GM12878 (cell line): ENCODE measurements at regions of chr1 and their contacts with region 1.

Region 1: GRCh38 chr1:160098852-160099561 is 588 bp upstream of the IGSF8 start:
- DNase-seq: peak; percentile 55
- ATAC-seq: peak; percentile 85
- H3K4me3 ChIP-seq: peak overlapping the region; percentile 82
- H3K27ac ChIP-seq: peak overlapping the region; percentile 54; the same call in 1 of the 2 replicates
- H3K4me1 ChIP-seq: peaks cover 25% of the 10 kb centered on the region
- H3K27me3 ChIP-seq: no peaks in the 10 kb centered on the region
- CTCF ChIP-seq: no peak
- EP300 ChIP-seq: no peak
- POLR2A ChIP-seq: no peak
- RAD21 ChIP-seq: no peak

Region 2: DNA sequence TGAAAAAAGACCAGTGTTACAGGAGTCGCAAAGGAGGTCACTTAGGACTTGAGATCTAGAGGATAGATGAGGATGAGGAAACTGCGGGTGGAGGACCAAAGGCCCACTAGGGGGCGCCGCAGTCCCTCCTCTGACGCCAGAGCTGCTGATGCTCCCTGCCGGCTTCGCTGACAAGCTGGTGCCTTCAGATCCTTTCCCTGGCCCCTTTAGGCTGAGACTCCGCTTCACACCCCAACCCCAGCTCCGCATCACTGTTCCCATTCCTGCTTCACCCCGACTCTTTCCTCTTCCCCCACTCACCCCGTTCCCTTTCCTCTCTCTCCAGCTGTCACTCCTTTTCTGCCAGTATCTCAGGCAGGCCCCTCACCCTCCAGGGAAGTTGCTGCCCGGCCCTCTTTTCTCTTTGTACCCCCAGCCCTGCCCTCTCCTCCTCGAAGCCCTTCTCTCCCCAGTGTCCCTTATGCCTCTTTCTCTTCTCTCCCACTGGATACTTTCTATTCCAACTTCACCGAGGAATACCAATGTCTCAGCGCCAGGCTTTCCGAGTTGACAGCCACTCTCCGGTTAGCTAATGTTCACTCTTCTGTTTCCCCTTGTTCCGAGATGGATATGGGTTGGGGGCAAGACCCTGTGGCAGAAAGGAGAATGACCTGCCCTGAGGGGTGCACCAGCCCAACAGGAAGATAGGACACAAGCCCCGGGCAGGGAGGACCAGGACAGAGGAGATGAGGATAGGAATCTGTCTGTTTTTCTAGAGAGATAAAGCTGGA is 13.1 kb before region 1 on chr1:
- CTCF ChIA-PET with region 1: interaction called, 1,035 read pairs
- POLR2A ChIA-PET with region 1: interaction called, 4 read pairs
- RAD21 ChIA-PET with region 1: interaction called, 31 read pairs
- SMC1A ChIA-PET with region 1: interaction called, 35 read pairs
- in situ Hi-C with region 1: no loop called
- intact Hi-C with region 1: no loop called
- DNase-seq: no peak
- ATAC-seq: peak; percentile 87
- H3K4me3 ChIP-seq: no peak overlapping the region
- H3K27ac ChIP-seq: no peak overlapping the region
- H3K4me1 ChIP-seq: no peaks in the 10 kb centered on the region
- H3K27me3 ChIP-seq: peaks cover 0 to 2% of the 10 kb centered on the region in 2 experiments; a peak in 3 of 4 replicates
- CTCF ChIP-seq: peak; percentile 82 to 89 (median 88)
- EP300 ChIP-seq: no peak
- POLR2A ChIP-seq: no peak
- RAD21 ChIP-seq: peak; percentile 59

Region 3: GRCh38 chr1:160161965-160162705 is 63.1 kb after region 1 on chr1:
- CTCF ChIA-PET with region 1: interaction called, 10 read pairs
- POLR2A ChIA-PET with region 1: no interaction called
- RAD21 ChIA-PET with region 1: no interaction called
- SMC1A ChIA-PET with region 1: interaction called, 4 read pairs
- in situ Hi-C with region 1: no loop called
- intact Hi-C with region 1: no loop called
- DNase-seq: no peak
- ATAC-seq: peak; percentile 92
- H3K4me3 ChIP-seq: no peak overlapping the region
- H3K27ac ChIP-seq: no peak overlapping the region
- H3K4me1 ChIP-seq: peaks cover 17% of the 10 kb centered on the region
- H3K27me3 ChIP-seq: no peaks in the 10 kb centered on the region; a peak in 1 of 4 replicates
- CTCF ChIP-seq: peak; percentile 51 to 63 (median 60); a peak in 5 of 6 replicates
- EP300 ChIP-seq: no peak
- POLR2A ChIP-seq: no peak
- RAD21 ChIP-seq: peak; percentile 72

Region 4: DNA sequence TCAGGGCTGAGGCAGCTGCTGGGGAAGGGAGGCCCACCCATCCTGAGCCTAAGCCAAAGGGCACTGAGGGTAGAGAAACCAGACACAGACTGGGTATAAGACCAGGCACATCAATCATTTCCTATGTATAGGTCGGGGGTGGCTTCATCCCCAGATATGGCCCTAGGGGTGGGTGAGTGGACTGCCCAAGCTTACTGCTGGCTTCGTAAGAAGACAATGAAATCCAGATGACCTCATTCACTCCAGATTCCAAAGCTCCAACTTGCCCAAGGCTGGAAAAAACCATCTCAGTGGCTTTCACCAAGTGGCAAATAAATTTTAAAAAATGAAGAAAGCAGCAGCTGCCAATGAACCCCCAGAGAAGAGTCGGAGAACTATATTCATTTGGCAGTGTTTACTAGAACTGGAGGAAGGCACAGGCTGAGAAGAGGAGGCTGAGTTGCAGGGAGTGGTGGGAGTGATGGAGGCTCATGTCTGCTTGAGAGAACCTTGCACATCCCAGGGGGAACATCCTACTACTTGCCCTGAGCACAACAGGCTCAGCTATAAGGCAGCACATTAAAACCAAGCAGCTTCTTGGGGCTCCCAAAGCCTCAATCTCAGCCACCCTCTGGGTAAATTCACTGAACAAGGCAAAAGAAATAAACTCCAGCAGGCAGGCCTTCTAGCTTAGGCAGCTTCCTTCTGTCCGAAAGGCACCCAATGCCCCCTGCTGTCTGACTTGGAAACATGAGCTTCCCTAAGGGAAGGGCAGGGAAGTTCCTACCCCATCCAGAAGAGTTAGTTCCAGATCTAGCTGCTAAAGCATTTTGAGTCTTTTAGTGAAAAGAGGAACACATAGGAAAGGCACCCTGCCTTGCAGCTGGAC is 120.3 kb after region 1 on chr1:
- CTCF ChIA-PET with region 1: interaction called, 21 read pairs
- POLR2A ChIA-PET with region 1: no interaction called
- RAD21 ChIA-PET with region 1: interaction called, 10 read pairs
- SMC1A ChIA-PET with region 1: interaction called, 11 read pairs
- in situ Hi-C with region 1: no loop called
- intact Hi-C with region 1: no loop called
- DNase-seq: no peak
- ATAC-seq: peak; percentile 44
- H3K4me3 ChIP-seq: no peak overlapping the region
- H3K27ac ChIP-seq: no peak overlapping the region
- H3K4me1 ChIP-seq: no peaks in the 10 kb centered on the region
- H3K27me3 ChIP-seq: no peaks in the 10 kb centered on the region
- CTCF ChIP-seq: peak; percentile 21 to 34 (median 34); a peak in 3 of 6 replicates
- EP300 ChIP-seq: no peak
- POLR2A ChIP-seq: no peak
- RAD21 ChIP-seq: peak; percentile 43

Region 5: GRCh38 chr1:160284782-160285344 is 185.9 kb after region 1 on chr1 and contains the start of gene PEX19:
- CTCF ChIA-PET with region 1: interaction called, 165 read pairs
- POLR2A ChIA-PET with region 1: interaction called, 4 read pairs
- RAD21 ChIA-PET with region 1: interaction called, 7 read pairs
- SMC1A ChIA-PET with region 1: interaction called, 10 read pairs
- in situ Hi-C with region 1: loop called (anchors 5 kb)
- intact Hi-C with region 1: no loop called
- DNase-seq: peak; percentile 71
- ATAC-seq: peak; percentile 100
- H3K4me3 ChIP-seq: peak within 1 kb of the TSS; percentile 91
- H3K27ac ChIP-seq: peak within 1 kb of the TSS; percentile 68
- H3K4me1 ChIP-seq: no peaks in the 10 kb centered on the region
- H3K27me3 ChIP-seq: no peaks in the 10 kb centered on the region
- CTCF ChIP-seq: no peak
- EP300 ChIP-seq: no peak
- POLR2A ChIP-seq: peak; percentile 90
- RAD21 ChIP-seq: no peak
- polyA plus RNA-seq, gene PEX19: 29.4 to 50.8 TPM